PC-3 (cell line): ENCODE measurements at regions of chr2 and their contacts with region 1.

Region 1: GRCh38 chr2:212249451-212249850 is 289.2 kb downstream of the ERBB4 start:
- DNase-seq: peak; percentile 5
- ATAC-seq: no peak; the same call in 1 of the 2 replicates
- H3K4me3 ChIP-seq: no peak overlapping the region
- H3K27ac ChIP-seq: no peak overlapping the region
- H3K4me1 ChIP-seq: no peaks in the 10 kb centered on the region
- H3K27me3 ChIP-seq: no peaks in the 10 kb centered on the region; the same call in 1 of the 2 replicates
- CTCF ChIP-seq: peak; percentile 60

Region 2: DNA sequence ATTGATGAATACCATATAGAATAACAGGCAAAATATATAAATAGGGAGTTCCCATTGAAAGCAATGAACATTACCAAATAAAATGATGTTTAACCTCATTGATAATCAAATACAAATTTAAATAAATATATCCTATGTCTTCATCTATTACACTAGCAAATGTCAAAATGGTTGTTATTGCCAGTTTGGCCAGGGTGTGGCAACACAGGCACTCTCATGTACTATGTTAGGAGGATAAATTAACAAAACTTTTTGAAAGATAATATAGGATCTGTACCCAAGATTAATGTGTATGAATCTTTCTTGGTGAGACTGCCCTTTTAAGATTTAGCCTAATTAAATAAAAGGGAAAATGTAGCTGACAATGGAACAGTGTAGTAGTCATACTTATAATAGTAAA is 370.1 kb before region 1 on chr2:
- CTCF ChIA-PET with region 1: no interaction called
- POLR2A ChIA-PET with region 1: no interaction called
- intact Hi-C with region 1: loop called (anchors 1 kb)
- DNase-seq: peak; percentile 24
- ATAC-seq: peak; percentile 67
- H3K4me3 ChIP-seq: no peak overlapping the region
- H3K27ac ChIP-seq: no peak overlapping the region
- H3K4me1 ChIP-seq: no peaks in the 10 kb centered on the region
- H3K27me3 ChIP-seq: no peaks in the 10 kb centered on the region
- CTCF ChIP-seq: peak; percentile 48

Region 3: GRCh38 chr2:212005085-212005671 is 244.3 kb before region 1 on chr2:
- CTCF ChIA-PET with region 1: no interaction called
- POLR2A ChIA-PET with region 1: no interaction called
- intact Hi-C with region 1: loop called (anchors 1 kb)
- DNase-seq: peak; percentile 68
- ATAC-seq: peak; percentile 87
- H3K4me3 ChIP-seq: no peak overlapping the region
- H3K27ac ChIP-seq: no peak overlapping the region
- H3K4me1 ChIP-seq: no peaks in the 10 kb centered on the region
- H3K27me3 ChIP-seq: no peaks in the 10 kb centered on the region
- CTCF ChIP-seq: peak; percentile 82

Region 4: GRCh38 chr2:212135739-212136138 is 113.7 kb before region 1 on chr2:
- CTCF ChIA-PET with region 1: no interaction called
- POLR2A ChIA-PET with region 1: no interaction called
- intact Hi-C with region 1: no loop called
- DNase-seq: no peak
- ATAC-seq: peak; percentile 35; the same call in 1 of the 2 replicates
- H3K4me3 ChIP-seq: no peak overlapping the region
- H3K27ac ChIP-seq: no peak overlapping the region
- H3K4me1 ChIP-seq: no peaks in the 10 kb centered on the region
- H3K27me3 ChIP-seq: no peaks in the 10 kb centered on the region
- CTCF ChIP-seq: no peak

Region 5: GRCh38 chr2:212147921-212148513 is 101.4 kb before region 1 on chr2:
- CTCF ChIA-PET with region 1: no interaction called
- POLR2A ChIA-PET with region 1: no interaction called
- intact Hi-C with region 1: loop called (anchors 5 kb)
- DNase-seq: peak; percentile 49
- ATAC-seq: no peak
- H3K4me3 ChIP-seq: no peak overlapping the region
- H3K27ac ChIP-seq: no peak overlapping the region
- H3K4me1 ChIP-seq: no peaks in the 10 kb centered on the region
- H3K27me3 ChIP-seq: no peaks in the 10 kb centered on the region
- CTCF ChIP-seq: peak; percentile 76

Region 6: DNA sequence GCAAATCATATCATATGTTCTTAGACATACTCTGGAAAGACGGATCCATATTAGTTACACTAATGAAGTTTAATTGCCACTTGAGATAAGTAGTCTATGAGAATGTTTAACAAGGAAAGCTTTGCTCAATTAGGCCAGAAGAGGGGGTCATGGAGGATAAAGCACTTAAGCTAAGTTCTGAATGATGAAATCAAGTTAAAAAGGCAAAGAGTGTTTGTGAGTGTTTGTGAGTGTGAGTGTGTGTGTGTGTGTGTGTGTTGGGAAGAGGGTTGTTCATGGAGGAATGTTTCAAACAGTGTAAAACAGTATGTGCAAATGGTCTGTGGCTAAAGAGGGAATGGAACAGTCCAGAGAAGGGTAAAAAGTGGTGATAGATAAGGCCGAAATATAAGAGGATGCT is 71.7 kb before region 1 on chr2:
- CTCF ChIA-PET with region 1: interaction called, 3 read pairs
- POLR2A ChIA-PET with region 1: no interaction called
- intact Hi-C with region 1: loop called (anchors 2 kb)
- DNase-seq: peak; percentile 9
- ATAC-seq: no peak
- H3K4me3 ChIP-seq: no peak overlapping the region
- H3K27ac ChIP-seq: no peak overlapping the region
- H3K4me1 ChIP-seq: peaks cover 3% of the 10 kb centered on the region; the same call in 1 of the 2 replicates
- H3K27me3 ChIP-seq: no peaks in the 10 kb centered on the region
- CTCF ChIP-seq: peak; percentile 45

Region 7: GRCh38 chr2:212227755-212228154 is 21.7 kb before region 1 on chr2:
- CTCF ChIA-PET with region 1: no interaction called
- POLR2A ChIA-PET with region 1: no interaction called
- intact Hi-C with region 1: no loop called
- DNase-seq: peak; percentile 82
- ATAC-seq: peak; percentile 71
- H3K4me3 ChIP-seq: no peak overlapping the region
- H3K27ac ChIP-seq: no peak overlapping the region
- H3K4me1 ChIP-seq: no peaks in the 10 kb centered on the region
- H3K27me3 ChIP-seq: no peaks in the 10 kb centered on the region
- CTCF ChIP-seq: no peak

Region 8: DNA sequence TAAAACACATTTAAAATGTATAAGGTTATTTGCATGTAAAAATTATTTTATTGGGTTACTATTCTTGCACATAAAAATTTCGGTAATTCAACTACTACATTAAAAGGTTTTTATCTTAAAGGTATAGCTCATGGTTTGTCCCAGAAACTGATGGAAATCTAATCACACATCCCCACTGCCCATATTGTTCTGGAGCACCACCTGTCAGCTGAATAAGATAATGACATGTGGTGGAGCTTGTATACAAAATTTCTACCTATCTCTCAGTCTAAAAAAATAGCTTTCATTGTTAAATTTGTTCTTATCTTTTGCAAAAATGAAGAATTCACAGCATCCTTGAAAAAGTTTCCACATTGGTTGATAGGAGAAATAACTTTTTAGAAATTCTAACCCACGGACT is 270.9 kb after region 1 on chr2:
- CTCF ChIA-PET with region 1: interaction called, 3 read pairs
- POLR2A ChIA-PET with region 1: no interaction called
- intact Hi-C with region 1: loop called (anchors 10 kb)
- DNase-seq: peak; percentile 25
- ATAC-seq: peak; percentile 60
- H3K4me3 ChIP-seq: no peak overlapping the region
- H3K27ac ChIP-seq: no peak overlapping the region
- H3K4me1 ChIP-seq: no peaks in the 10 kb centered on the region
- H3K27me3 ChIP-seq: 0 out of 2 replicates have a peak, but pooled peaks cover 3% of the 10 kb centered on the region
- CTCF ChIP-seq: peak; percentile 57

Region 9: GRCh38 chr2:213411582-213412289 is 1162.3 kb after region 1 on chr2:
- CTCF ChIA-PET with region 1: interaction called, 13 read pairs
- POLR2A ChIA-PET with region 1: no interaction called
- intact Hi-C with region 1: no loop called
- DNase-seq: peak; percentile 73
- ATAC-seq: peak; percentile 73
- H3K4me3 ChIP-seq: peak overlapping the region; percentile 59
- H3K27ac ChIP-seq: peak overlapping the region; percentile 82
- H3K4me1 ChIP-seq: peaks cover 17% of the 10 kb centered on the region
- H3K27me3 ChIP-seq: no peaks in the 10 kb centered on the region
- CTCF ChIP-seq: no peak